SK-N-SH (cell line): ENCODE measurements at regions of chr4 and their contacts with region 1.

Region 1: DNA sequence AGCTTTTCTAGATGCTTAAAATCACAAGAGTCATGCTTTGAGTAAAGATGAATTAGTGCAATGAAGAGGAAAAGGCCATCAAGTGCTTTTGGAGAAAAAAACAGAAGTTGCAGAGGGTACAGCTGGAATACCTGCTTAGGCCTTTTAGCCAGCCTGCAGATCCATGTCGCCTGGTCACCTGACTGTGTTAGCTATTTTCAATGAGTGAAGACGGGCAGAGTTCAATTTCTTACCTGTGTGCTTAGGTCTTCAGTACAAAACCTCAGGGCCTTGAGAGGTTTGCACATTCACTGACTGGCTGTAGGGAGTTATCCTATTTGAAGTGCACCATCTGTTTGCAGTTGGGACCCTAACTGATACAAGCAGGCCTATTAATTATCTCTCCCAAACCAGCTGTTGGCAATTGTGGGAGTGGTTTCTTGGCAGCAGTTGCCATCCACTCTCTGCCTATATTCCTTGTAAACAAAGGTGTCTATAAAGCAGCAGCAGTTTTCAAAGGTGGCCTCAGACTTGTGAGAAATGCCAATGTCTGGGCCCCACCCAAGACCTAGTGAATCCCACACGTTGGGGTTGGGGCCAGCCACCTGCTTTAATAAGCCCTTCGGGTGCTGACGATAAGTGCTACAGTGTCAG is 16.3 kb upstream of the FAT1 start:
- DNase-seq: peak; percentile 42
- H3K4me3 ChIP-seq: no peak overlapping the region
- H3K27ac ChIP-seq: no peak overlapping the region
- H3K4me1 ChIP-seq: no peaks in the 10 kb centered on the region; a peak in 2 of 4 replicates
- H3K27me3 ChIP-seq: no peaks in the 10 kb centered on the region
- CTCF ChIP-seq: no peak
- EP300 ChIP-seq: no peak
- RAD21 ChIP-seq: no peak

Region 2: GRCh38 chr4:186725469-186726425 is 14.2 kb before region 1 on chr4:
- CTCF ChIA-PET with region 1: interaction called, 10 read pairs
- POLR2A ChIA-PET with region 1: no interaction called
- DNase-seq: peak; percentile 76
- H3K4me3 ChIP-seq: peak overlapping the region; percentile 60 to 74
- H3K27ac ChIP-seq: peak overlapping the region in 1 of 2 experiments; percentile 77; a peak in 2 of 4 replicates
- H3K4me1 ChIP-seq: peaks cover 0 to 4% of the 10 kb centered on the region in 2 experiments; a peak in 3 of 4 replicates
- H3K27me3 ChIP-seq: peaks cover 20% of the 10 kb centered on the region; the same call in 1 of the 2 replicates
- CTCF ChIP-seq: peak; percentile 70
- EP300 ChIP-seq: no peak
- RAD21 ChIP-seq: peak; percentile 67

Region 3: DNA sequence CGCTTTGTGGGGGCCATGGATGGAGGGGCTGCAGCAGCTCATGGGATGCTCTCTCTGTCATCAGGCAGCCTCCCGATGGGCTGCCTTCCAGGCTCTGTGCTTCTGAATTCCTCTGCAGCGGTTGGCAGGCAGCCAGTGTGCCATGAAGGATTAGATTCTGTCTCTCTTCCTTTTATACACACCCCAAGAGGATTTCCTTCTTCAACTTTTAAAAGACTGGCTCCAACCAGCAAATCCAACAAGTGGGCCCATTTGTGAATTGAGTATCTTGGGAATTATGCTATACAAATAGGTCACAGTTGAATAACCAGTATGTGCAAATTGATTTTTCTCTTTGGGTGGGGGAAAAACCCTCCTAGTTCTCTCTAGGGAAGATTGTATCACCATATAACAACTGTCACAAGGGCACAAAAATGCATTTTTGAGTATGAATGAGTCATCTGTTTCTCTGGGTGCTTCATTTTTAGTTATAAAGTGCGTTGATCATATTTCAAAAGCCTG is 80.5 kb after region 1 on chr4:
- CTCF ChIA-PET with region 1: no interaction called
- POLR2A ChIA-PET with region 1: no interaction called
- DNase-seq: peak; percentile 10
- H3K4me3 ChIP-seq: no peak overlapping the region
- H3K27ac ChIP-seq: peak overlapping the region in 1 of 2 experiments; percentile 59; a peak in 3 of 4 replicates
- H3K4me1 ChIP-seq: peaks cover 0 to 12% of the 10 kb centered on the region in 2 experiments; a peak in 3 of 4 replicates
- H3K27me3 ChIP-seq: no peaks in the 10 kb centered on the region
- CTCF ChIP-seq: no peak
- EP300 ChIP-seq: no peak; a peak in 1 of 4 replicates
- RAD21 ChIP-seq: no peak